ENCODE measurements at regions of chr11 and their contacts with region 1.

Region 1: DNA sequence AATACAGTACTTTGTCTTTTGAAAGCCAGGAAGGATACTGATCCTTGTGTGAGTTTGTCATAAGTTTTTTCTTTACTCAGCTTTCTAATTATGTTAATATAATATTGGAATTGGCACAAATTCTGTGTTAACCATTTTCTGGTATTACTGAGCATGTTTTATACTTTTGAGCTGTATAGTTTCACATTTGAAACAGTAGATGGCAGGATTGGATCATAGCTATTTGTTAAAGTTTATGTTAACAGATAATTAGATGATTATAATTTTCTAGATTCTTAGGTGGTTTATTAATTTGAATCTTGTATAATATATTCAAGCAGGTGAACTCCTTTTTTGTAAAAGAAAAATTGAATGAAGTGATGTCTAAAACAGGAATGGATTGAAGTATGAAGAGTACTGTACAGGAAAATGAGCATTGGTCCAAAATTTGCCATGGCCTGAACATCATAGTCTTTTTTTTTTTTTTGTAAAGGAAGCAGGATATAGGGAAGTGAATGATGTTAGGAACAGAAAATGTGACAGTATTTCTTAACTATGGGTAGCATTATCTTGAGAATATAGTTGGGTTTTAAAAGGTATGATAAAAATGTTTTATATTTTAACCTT is 102.0 kb downstream of the CYP2R1 start:
- DNase-seq: peak; percentile 27
- H3K4me3 ChIP-seq: no peak overlapping the region
- H3K27ac ChIP-seq: no peak overlapping the region
- H3K4me1 ChIP-seq: peaks cover 21% of the 10 kb centered on the region
- H3K27me3 ChIP-seq: no peaks in the 10 kb centered on the region
- CTCF ChIP-seq: peak; percentile 20 to 26
- POLR2A ChIP-seq: no peak

Region 2: DNA sequence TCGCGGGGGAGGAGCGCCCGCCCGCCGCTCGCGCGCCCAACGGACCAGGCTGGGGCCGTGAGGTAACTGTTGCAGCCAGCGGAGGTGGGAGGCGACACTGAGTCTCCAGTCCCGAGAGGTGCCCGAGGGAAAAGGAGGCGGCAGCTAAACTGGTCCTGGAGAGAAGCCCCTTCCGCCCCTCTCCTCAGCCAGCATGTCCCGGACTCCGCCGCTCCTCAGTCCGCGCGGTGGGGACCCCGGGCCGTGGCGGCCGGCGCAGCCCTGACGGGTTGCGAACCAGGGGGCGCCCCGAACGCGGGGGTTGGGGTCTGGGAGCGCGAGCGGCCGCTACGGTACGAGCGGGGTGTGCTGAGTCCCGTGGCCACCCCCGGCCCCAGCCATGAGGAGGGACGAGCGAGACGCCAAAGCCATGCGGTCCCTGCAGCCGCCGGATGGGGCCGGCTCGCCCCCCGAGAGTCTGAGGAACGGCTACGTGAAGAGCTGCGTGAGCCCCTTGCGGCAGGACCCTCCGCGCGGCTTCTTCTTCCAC is 146.2 kb before region 1 on chr11 and contains the start of gene PDE3B:
- CTCF ChIA-PET with region 1: no interaction called
- POLR2A ChIA-PET with region 1: no interaction called
- dilution Hi-C with region 1: no loop called
- intact Hi-C with region 1: loop called (anchors 5 kb)
- DNase-seq: peak; percentile 35
- H3K4me3 ChIP-seq: peak within 1 kb of the TSS; percentile 51 to 65 (median 64)
- H3K27ac ChIP-seq: peak within 1 kb of the TSS; percentile 15
- H3K4me1 ChIP-seq: peaks cover 18% of the 10 kb centered on the region
- H3K27me3 ChIP-seq: peaks cover 8 to 15% of the 10 kb centered on the region in 2 experiments
- CTCF ChIP-seq: no peak
- POLR2A ChIP-seq: no peak
- total RNA-seq, gene PDE3B: 1.7 and 1.9 TPM in 2 replicates

Region 3: GRCh38 chr11:14727215-14727614 is 62.8 kb before region 1 on chr11:
- CTCF ChIA-PET with region 1: no interaction called
- POLR2A ChIA-PET with region 1: no interaction called
- dilution Hi-C with region 1: no loop called
- intact Hi-C with region 1: no loop called
- DNase-seq: no peak
- H3K4me3 ChIP-seq: no peak overlapping the region
- H3K27ac ChIP-seq: no peak overlapping the region
- H3K4me1 ChIP-seq: no peaks in the 10 kb centered on the region
- H3K27me3 ChIP-seq: peaks cover 2% of the 10 kb centered on the region in 2 experiments
- CTCF ChIP-seq: no peak
- POLR2A ChIP-seq: no peak

Region 4: DNA sequence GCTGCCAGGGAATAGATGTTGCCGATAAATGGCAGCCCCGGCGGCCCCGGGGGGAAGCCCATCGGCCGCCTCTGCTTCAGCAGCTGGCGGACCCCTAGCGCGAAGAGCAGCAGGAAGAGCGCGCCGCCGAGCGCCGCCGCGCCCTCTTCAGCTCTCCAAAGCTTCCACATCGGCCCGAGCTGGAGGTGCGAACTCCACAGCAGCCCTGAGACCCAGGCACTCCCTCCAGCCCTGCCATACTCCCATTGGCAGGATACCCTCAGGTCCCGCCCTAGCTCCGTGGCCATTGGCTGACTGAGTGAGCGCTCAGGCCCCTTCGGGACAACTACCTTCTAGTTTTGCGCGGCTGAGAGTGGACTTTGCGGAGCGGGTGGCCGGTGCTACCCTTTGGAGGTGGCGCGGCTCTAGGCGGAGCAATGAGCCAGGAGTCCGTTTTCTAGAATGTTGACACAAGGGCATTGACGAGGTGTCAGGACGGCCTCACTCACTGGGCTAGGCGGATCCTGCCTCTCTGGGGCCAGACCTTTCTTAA is 102.1 kb after region 1 on chr11 and contains the start of gene CYP2R1:
- CTCF ChIA-PET with region 1: interaction called, 24 read pairs
- POLR2A ChIA-PET with region 1: no interaction called
- dilution Hi-C with region 1: no loop called
- intact Hi-C with region 1: no loop called
- DNase-seq: peak; percentile 98
- H3K4me3 ChIP-seq: peak within 1 kb of the TSS; percentile 52 to 73 (median 60)
- H3K27ac ChIP-seq: peak within 1 kb of the TSS; percentile 54
- H3K4me1 ChIP-seq: peaks cover 9% of the 10 kb centered on the region
- H3K27me3 ChIP-seq: no peaks in the 10 kb centered on the region
- CTCF ChIP-seq: no peak
- POLR2A ChIP-seq: no peak
- total RNA-seq, gene CYP2R1: 8.0 and 11.6 TPM in 2 replicates

Region 5: GRCh38 chr11:15006139-15006759 is 216.3 kb after region 1 on chr11:
- CTCF ChIA-PET with region 1: interaction called, 102 read pairs
- POLR2A ChIA-PET with region 1: no interaction called
- dilution Hi-C with region 1: no loop called
- intact Hi-C with region 1: loop called (anchors 1 kb)
- DNase-seq: peak; percentile 42
- H3K4me3 ChIP-seq: no peak overlapping the region
- H3K27ac ChIP-seq: no peak overlapping the region
- H3K4me1 ChIP-seq: no peaks in the 10 kb centered on the region
- H3K27me3 ChIP-seq: peaks cover 0 to 2% of the 10 kb centered on the region in 2 experiments
- CTCF ChIP-seq: peak in 1 of 2 donors; percentile 46
- POLR2A ChIP-seq: no peak

Region 6: GRCh38 chr11:15101072-15101709 is 311.2 kb after region 1 on chr11:
- CTCF ChIA-PET with region 1: interaction called, 15 read pairs
- POLR2A ChIA-PET with region 1: no interaction called
- dilution Hi-C with region 1: no loop called
- intact Hi-C with region 1: no loop called
- DNase-seq: peak; percentile 63
- H3K4me3 ChIP-seq: no peak overlapping the region
- H3K27ac ChIP-seq: no peak overlapping the region
- H3K4me1 ChIP-seq: no peaks in the 10 kb centered on the region
- H3K27me3 ChIP-seq: peaks cover 4 to 5% of the 10 kb centered on the region in 2 experiments
- CTCF ChIP-seq: peak; percentile 78 to 90
- POLR2A ChIP-seq: no peak

Measured in endothelial cell of umbilical vein (primary cell).